ENCODE measurements at regions of chr1 and their contacts with region 1.

Region 1: GRCh38 chr1:74771913-74772515 is 39.1 kb downstream of the TYW3 start:
- DNase-seq: peak; percentile 36 to 44
- H3K4me3 ChIP-seq: no peak overlapping the region
- H3K4me1 ChIP-seq: no peaks in the 10 kb centered on the region
- H3K27me3 ChIP-seq: peaks cover 32% of the 10 kb centered on the region

Region 2: GRCh38 chr1:74412244-74412643 is 359.8 kb before region 1 on chr1:
- in situ Hi-C with region 1: no loop called
- DNase-seq: no peak
- H3K4me3 ChIP-seq: no peak overlapping the region
- H3K4me1 ChIP-seq: no peaks in the 10 kb centered on the region
- H3K27me3 ChIP-seq: 0 out of 2 replicates have a peak, but pooled peaks cover 2% of the 10 kb centered on the region

Region 3: GRCh38 chr1:74641876-74642275 is 130.1 kb before region 1 on chr1:
- in situ Hi-C with region 1: no loop called
- DNase-seq: no peak
- H3K4me3 ChIP-seq: no peak overlapping the region
- H3K4me1 ChIP-seq: no peaks in the 10 kb centered on the region
- H3K27me3 ChIP-seq: no peaks in the 10 kb centered on the region

Region 4: DNA sequence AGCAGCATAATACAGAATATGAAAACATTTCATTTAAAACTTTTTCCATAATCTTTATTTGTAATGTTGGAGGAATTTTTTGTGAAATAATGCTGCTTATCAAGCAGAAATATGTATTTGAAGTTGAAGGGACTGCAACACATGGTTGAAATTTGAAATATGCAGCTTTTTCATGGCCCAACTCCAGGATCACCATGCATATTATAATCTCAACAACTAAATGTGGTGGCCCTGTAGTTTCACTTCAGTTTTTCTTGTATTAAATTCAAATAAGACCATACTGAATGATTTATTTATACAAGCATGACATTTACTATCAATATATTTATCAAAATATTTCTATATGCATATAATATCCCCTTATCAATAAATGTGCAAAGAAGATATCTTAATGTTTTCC is 204.5 kb after region 1 on chr1:
- in situ Hi-C with region 1: no loop called
- DNase-seq: no peak
- H3K4me3 ChIP-seq: no peak overlapping the region
- H3K4me1 ChIP-seq: no peaks in the 10 kb centered on the region
- H3K27me3 ChIP-seq: no peaks in the 10 kb centered on the region

Region 5: DNA sequence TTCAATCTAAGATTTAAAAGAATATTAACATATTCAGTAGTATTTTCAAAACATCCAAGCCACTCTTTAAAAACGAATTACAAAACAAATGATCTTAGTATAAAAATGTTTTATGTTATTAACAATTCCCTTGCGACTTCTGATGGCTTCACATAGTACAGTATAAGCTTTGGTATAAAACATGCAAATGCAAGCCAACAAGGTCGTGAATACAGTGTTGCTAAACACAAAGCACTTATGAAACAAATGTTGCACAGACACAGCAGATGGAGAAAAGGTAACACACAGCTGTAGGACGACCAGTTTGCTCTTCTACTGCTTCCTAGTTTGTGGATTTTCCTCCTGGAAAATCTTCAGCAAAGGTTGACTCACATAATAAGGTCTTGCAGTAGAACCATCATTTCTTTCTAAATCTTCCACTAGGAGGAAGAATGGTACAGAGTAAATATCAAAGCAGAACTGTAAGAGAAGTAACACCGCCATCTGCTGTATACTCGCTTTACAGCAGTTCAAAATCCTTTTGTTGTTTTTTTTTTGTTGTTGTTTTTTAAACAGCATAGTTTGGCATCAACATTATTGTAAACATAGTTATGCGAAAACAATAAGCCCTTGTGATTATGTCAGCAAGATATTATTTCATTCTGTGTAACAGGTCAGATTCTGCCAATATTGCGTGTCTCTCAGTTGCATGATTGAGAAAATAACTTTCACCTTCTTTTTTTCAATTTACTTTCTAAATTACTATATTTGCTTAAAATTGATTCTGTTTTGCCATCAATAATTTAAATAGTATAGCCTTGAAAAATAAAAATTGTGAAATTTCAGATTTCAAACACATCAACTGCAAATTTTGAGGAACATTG is 431.6 kb after region 1 on chr1:
- in situ Hi-C with region 1: loop called (anchors 10 kb)
- DNase-seq: peak; percentile 17 to 72
- H3K4me3 ChIP-seq: no peak overlapping the region
- H3K4me1 ChIP-seq: no peaks in the 10 kb centered on the region
- H3K27me3 ChIP-seq: peaks cover 9% of the 10 kb centered on the region; the same call in 1 of the 2 replicates

Region 6: DNA sequence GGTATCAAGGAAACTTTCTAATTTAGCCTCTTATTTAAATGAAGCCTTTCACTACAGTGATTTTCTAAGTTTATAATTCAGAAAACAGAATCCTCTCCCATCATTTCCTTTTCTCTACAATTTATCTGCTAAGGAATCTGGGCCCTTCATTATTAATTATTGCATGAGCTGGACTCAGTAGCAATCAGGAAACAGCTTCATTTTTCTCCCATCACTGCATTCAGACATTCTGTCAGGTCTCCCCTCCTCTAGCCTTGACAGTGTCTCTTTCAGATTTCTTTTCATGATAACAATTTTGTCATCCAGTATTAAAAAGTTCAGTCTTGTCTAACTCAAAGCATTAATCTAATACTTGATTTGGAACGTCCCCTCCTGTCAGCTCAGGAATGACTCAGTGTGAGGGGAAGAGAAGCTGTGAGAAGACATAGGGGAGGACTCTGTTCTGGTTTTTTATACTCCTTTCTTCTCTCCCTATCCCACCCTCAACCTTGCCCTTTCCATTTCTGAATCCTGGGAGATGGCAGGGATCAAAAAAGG is 810.8 kb after region 1 on chr1:
- in situ Hi-C with region 1: no loop called
- DNase-seq: no peak
- H3K4me3 ChIP-seq: no peak overlapping the region
- H3K4me1 ChIP-seq: no peaks in the 10 kb centered on the region
- H3K27me3 ChIP-seq: no peaks in the 10 kb centered on the region

Measured in HAP-1 (cell line).